ENCODE measurements at regions of chr2 and their contacts with region 1.

Region 1: DNA sequence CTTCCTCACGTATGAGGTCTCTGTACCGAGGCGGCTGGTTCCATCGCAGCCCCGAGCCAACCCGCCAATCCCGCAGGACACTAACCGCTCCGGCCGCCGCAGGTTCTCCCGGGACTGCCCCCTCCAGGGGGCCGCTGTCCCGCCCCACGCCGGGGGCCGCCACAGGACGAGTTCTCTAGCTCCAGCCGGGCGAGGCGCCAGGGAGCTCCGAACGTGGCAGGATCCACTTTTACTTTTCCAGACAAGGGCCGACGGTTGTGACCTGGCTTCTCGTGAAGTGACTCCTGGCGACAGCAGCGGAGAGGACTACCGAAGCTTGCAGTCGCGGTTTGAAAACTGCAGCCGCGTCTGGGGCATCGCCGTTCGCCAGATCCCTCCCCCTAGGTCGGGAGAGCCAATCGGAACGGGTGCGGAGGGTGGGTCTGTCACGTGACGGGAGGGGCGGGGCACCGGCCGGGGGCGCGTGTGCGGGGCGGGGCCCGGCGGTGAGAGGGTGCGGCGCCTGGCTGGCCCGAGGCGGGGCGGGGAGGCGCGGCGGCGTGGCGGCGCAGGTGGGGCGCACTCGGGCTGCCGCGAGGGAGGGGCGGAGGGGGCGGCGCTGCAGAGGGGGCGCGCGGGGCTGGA is at the start of gene STK17B:
- DNase-seq: peak; percentile 93 to 97 (median 95)
- H3K4me3 ChIP-seq: peak within 1 kb of the TSS; percentile 87 to 88
- H3K4me3 Mint-ChIP-seq: peak within 1 kb of the TSS; percentile 91 to 99 (median 96)
- H3K27ac ChIP-seq: peak within 1 kb of the TSS; percentile 92
- H3K27ac Mint-ChIP-seq: peak within 1 kb of the TSS; percentile 94 to 98 (median 96)
- H3K4me1 ChIP-seq: peaks cover 45% of the 10 kb centered on the region
- H3K4me1 Mint-ChIP-seq: peaks cover 31 to 52% (median 39%) of the 10 kb centered on the region in 4 donors
- H3K27me3 ChIP-seq: no peaks in the 10 kb centered on the region
- H3K27me3 Mint-ChIP-seq: no peaks in the 10 kb centered on the region
- total RNA-seq, gene STK17B: 234 to 243 TPM

Region 2: GRCh38 chr2:196076778-196077568 is 94.4 kb before region 1 on chr2:
- CTCF ChIA-PET with region 1: interaction called, 21 read pairs
- POLR2A ChIA-PET with region 1: interaction called, 44 read pairs
- intact Hi-C with region 1: loop called (anchors 2 kb)
- DNase-seq: no peak
- H3K4me3 ChIP-seq: no peak overlapping the region
- H3K4me3 Mint-ChIP-seq: no peak overlapping the region
- H3K27ac ChIP-seq: no peak overlapping the region
- H3K27ac Mint-ChIP-seq: no peak overlapping the region
- H3K4me1 ChIP-seq: peaks cover 25% of the 10 kb centered on the region
- H3K4me1 Mint-ChIP-seq: peaks cover 14 to 22% (median 16%) of the 10 kb centered on the region in 4 donors
- H3K27me3 ChIP-seq: no peaks in the 10 kb centered on the region
- H3K27me3 Mint-ChIP-seq: no peaks in the 10 kb centered on the region

Region 3: GRCh38 chr2:196143730-196144131 is 27.6 kb before region 1 on chr2:
- CTCF ChIA-PET with region 1: interaction called, 4 read pairs
- POLR2A ChIA-PET with region 1: interaction called, 74 read pairs
- intact Hi-C with region 1: loop called (anchors 1 kb)
- DNase-seq: no peak
- H3K4me3 ChIP-seq: no peak overlapping the region
- H3K4me3 Mint-ChIP-seq: peak overlapping the region in 5 of 8 donors; percentile 13 to 74 (median 59)
- H3K27ac ChIP-seq: no peak overlapping the region
- H3K27ac Mint-ChIP-seq: peak overlapping the region; percentile 44 to 89 (median 81)
- H3K4me1 ChIP-seq: peaks cover 72% of the 10 kb centered on the region
- H3K4me1 Mint-ChIP-seq: peaks cover 41 to 77% (median 60%) of the 10 kb centered on the region in 4 donors
- H3K27me3 ChIP-seq: no peaks in the 10 kb centered on the region
- H3K27me3 Mint-ChIP-seq: no peaks in the 10 kb centered on the region

Region 4: GRCh38 chr2:196187898-196188458 is 16.6 kb after region 1 on chr2:
- CTCF ChIA-PET with region 1: interaction called, 5 read pairs
- POLR2A ChIA-PET with region 1: interaction called, 183 read pairs
- intact Hi-C with region 1: loop called (anchors 1 kb)
- DNase-seq: no peak
- H3K4me3 ChIP-seq: no peak overlapping the region
- H3K4me3 Mint-ChIP-seq: peak overlapping the region in 3 of 8 donors; percentile 13 to 51 (median 25)
- H3K27ac ChIP-seq: no peak overlapping the region
- H3K27ac Mint-ChIP-seq: peak overlapping the region; percentile 42 to 86 (median 59)
- H3K4me1 ChIP-seq: peaks cover 64% of the 10 kb centered on the region
- H3K4me1 Mint-ChIP-seq: peaks cover 51 to 91% (median 71%) of the 10 kb centered on the region in 4 donors
- H3K27me3 ChIP-seq: no peaks in the 10 kb centered on the region
- H3K27me3 Mint-ChIP-seq: no peaks in the 10 kb centered on the region

Region 5: GRCh38 chr2:196213252-196213980 is 42.1 kb after region 1 on chr2:
- CTCF ChIA-PET with region 1: interaction called, 22 read pairs
- POLR2A ChIA-PET with region 1: interaction called, 108 read pairs
- intact Hi-C with region 1: loop called (anchors 1 kb)
- DNase-seq: peak in 2 of 5 donors; percentile 23 to 26
- H3K4me3 ChIP-seq: no peak overlapping the region
- H3K4me3 Mint-ChIP-seq: peak overlapping the region in 1 of 8 donors; percentile 44
- H3K27ac ChIP-seq: no peak overlapping the region
- H3K27ac Mint-ChIP-seq: peak overlapping the region; percentile 78 to 100 (median 99)
- H3K4me1 ChIP-seq: peaks cover 61% of the 10 kb centered on the region
- H3K4me1 Mint-ChIP-seq: peaks cover 45 to 80% (median 65%) of the 10 kb centered on the region in 4 donors
- H3K27me3 ChIP-seq: no peaks in the 10 kb centered on the region
- H3K27me3 Mint-ChIP-seq: no peaks in the 10 kb centered on the region

Region 6: DNA sequence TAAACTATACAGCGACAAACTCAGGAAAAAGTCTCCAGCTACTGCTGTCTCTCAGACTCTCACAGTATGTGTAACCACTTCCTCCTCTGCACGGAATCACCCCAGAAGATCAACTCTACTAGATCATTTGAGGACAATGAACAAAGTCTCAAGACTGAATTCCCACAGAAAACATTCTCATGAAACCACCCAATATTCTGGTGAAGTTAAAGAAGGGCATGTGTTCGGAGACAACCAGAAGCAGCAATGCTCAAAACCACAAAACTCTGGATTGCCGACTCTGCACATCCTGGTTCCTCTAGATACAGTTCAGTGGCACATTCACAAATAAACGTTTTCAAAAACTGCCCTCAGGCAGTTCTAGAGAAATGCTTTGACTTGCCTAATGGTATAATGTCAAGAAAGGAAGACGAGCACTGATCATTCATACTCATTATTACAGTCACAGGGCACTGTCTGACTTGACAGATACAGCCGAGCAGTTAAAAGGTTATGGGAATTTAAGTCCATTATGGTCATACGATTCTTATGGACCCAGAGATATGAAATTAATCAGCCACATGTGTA is 91.9 kb after region 1 on chr2:
- CTCF ChIA-PET with region 1: interaction called, 6 read pairs
- POLR2A ChIA-PET with region 1: interaction called, 85 read pairs
- intact Hi-C with region 1: no loop called
- DNase-seq: peak; percentile 72 to 82 (median 78)
- H3K4me3 ChIP-seq: peak overlapping the region in 1 of 2 donors; percentile 33
- H3K4me3 Mint-ChIP-seq: peak overlapping the region; percentile 63 to 91 (median 79)
- H3K27ac ChIP-seq: peak overlapping the region; percentile 78
- H3K27ac Mint-ChIP-seq: peak overlapping the region; percentile 85 to 99 (median 97)
- H3K4me1 ChIP-seq: peaks cover 93% of the 10 kb centered on the region
- H3K4me1 Mint-ChIP-seq: peaks cover 59 to 83% (median 71%) of the 10 kb centered on the region in 4 donors
- H3K27me3 ChIP-seq: no peaks in the 10 kb centered on the region
- H3K27me3 Mint-ChIP-seq: no peaks in the 10 kb centered on the region